Caco-2 (cell line): ENCODE measurements at regions of chr6 and their contacts with region 1.

Region 1: GRCh38 chr6:114304304-114304887 is 38.4 kb downstream of the HS3ST5 start:
- DNase-seq: peak in 1 of 2 experiments; percentile 10
- H3K4me3 ChIP-seq: no peak overlapping the region
- H3K4me3 Mint-ChIP-seq: no peak overlapping the region
- H3K27ac Mint-ChIP-seq: no peak overlapping the region
- H3K4me1 ChIP-seq: no peaks in the 10 kb centered on the region
- H3K4me1 Mint-ChIP-seq: no peaks in the 10 kb centered on the region
- H3K27me3 ChIP-seq: no peaks in the 10 kb centered on the region
- H3K27me3 Mint-ChIP-seq: no peaks in the 10 kb centered on the region
- CTCF ChIP-seq: peak; percentile 44 to 52

Region 2: DNA sequence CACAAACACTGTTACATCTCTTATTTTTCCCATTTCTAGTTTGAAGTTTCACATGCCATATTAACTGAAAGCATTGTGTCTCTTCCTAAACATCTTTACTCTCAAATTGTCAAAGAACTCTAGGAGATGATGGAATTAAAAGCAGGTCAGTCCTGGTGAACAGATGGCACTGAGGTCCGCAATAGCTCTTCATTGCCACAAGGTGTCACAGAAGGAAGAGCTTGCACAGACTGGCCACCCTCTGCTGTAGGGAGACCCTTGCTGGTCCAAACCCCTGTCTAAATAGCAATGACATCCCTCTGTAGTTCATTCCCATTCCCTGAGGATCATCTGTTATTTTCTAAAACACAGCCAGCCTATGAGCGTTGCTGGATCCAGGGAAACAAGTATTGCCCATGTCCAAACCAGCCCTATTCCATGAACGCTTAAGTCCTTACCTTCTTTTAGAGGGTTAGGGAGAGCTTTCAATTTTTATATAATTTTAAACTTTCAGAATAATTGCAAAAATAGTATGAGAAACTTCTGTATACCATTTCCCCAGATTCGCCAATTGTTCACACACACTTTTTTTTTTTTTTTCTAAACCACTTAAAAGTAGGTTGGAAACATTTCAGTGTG is 323.4 kb before region 1 on chr6:
- CTCF ChIA-PET with region 1: interaction called, 10 read pairs
- POLR2A ChIA-PET with region 1: no interaction called
- intact Hi-C with region 1: no loop called
- DNase-seq: peak; percentile 50 to 66
- H3K4me3 ChIP-seq: no peak overlapping the region
- H3K4me3 Mint-ChIP-seq: no peak overlapping the region
- H3K27ac Mint-ChIP-seq: no peak overlapping the region
- H3K4me1 ChIP-seq: no peaks in the 10 kb centered on the region
- H3K4me1 Mint-ChIP-seq: no peaks in the 10 kb centered on the region
- H3K27me3 ChIP-seq: no peaks in the 10 kb centered on the region
- H3K27me3 Mint-ChIP-seq: no peaks in the 10 kb centered on the region
- CTCF ChIP-seq: peak; percentile 76 to 78

Region 3: DNA sequence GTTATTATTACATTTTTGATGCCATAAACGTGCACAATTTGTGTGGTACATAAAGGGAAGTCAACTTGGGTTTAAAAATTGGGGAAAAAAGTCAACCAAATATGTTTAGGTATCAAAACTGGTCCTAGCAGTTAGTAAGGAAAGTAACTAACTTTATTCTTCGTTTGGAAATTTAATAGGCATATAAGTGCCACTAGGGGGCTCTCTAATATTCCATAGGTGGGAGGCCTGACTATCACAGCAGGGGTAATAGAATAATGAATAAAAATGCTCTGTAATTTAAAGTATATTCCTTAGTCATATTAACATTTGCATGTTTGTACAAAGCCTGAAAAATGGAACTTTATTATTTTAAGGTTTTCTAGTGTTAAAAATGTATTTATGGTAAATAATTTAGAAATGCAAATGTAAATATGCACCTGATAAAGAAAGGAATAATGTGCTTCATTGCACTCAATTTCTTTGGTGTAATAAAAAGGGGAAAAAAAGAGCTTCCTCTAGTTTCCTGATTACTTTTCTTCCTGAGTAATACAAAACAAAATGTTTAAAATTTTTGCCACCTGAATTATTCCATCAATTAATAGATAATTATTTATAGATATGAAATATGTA is 207.7 kb before region 1 on chr6:
- CTCF ChIA-PET with region 1: interaction called, 3 read pairs
- POLR2A ChIA-PET with region 1: no interaction called
- intact Hi-C with region 1: loop called (anchors 1 kb)
- DNase-seq: peak in 1 of 2 experiments; percentile 20
- H3K4me3 ChIP-seq: no peak overlapping the region
- H3K4me3 Mint-ChIP-seq: no peak overlapping the region
- H3K27ac Mint-ChIP-seq: no peak overlapping the region
- H3K4me1 ChIP-seq: no peaks in the 10 kb centered on the region
- H3K4me1 Mint-ChIP-seq: no peaks in the 10 kb centered on the region
- H3K27me3 ChIP-seq: no peaks in the 10 kb centered on the region
- H3K27me3 Mint-ChIP-seq: no peaks in the 10 kb centered on the region
- CTCF ChIP-seq: peak; percentile 67

Region 4: DNA sequence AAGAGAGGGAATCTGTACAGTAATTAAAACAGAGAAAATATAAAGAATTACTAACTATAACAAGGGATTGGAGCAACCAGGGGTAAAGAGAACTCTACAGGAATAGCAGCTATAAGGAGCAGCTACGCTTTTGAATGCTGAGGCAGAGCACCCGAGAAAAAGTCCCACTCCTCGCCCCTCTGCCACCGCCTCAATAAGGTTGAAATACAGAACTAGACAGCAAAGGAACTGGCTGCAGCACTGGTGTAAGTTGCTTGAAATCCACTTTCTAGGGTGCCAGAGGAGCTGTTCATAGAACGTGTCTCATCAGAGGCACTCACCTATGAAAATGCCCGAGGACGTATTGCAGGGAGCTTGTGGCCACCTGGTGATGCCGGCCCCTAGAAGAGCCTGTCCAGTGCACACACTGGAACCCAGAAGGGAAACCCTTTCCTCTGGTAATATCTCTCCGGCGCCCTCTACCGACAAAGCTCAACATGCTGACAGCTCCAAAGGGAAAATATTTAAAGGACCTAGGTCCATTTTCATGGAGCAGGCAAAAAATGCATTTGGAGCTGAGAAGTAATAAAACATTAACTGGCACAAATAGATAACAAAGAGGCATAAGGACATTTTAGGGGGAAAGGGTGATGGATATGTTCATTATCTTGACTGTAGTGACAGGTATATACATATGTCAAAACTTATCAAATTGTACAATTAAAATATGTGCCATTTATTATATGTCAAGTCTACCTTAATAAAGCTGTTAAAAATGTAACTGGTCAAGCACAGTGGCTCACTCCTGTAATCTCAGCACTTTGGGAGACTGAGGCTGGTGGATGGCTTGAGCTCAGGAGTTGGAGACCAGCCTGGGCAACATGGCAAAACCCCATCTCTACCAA is 196.0 kb before region 1 on chr6:
- CTCF ChIA-PET with region 1: interaction called, 11 read pairs
- POLR2A ChIA-PET with region 1: no interaction called
- intact Hi-C with region 1: no loop called
- DNase-seq: peak; percentile 85 to 87
- H3K4me3 ChIP-seq: no peak overlapping the region
- H3K4me3 Mint-ChIP-seq: no peak overlapping the region
- H3K27ac Mint-ChIP-seq: no peak overlapping the region
- H3K4me1 ChIP-seq: peaks cover 5% of the 10 kb centered on the region; the same call in 1 of the 2 replicates
- H3K4me1 Mint-ChIP-seq: peaks cover 13% of the 10 kb centered on the region
- H3K27me3 ChIP-seq: no peaks in the 10 kb centered on the region
- H3K27me3 Mint-ChIP-seq: no peaks in the 10 kb centered on the region
- CTCF ChIP-seq: peak; percentile 76 to 79

Region 5: DNA sequence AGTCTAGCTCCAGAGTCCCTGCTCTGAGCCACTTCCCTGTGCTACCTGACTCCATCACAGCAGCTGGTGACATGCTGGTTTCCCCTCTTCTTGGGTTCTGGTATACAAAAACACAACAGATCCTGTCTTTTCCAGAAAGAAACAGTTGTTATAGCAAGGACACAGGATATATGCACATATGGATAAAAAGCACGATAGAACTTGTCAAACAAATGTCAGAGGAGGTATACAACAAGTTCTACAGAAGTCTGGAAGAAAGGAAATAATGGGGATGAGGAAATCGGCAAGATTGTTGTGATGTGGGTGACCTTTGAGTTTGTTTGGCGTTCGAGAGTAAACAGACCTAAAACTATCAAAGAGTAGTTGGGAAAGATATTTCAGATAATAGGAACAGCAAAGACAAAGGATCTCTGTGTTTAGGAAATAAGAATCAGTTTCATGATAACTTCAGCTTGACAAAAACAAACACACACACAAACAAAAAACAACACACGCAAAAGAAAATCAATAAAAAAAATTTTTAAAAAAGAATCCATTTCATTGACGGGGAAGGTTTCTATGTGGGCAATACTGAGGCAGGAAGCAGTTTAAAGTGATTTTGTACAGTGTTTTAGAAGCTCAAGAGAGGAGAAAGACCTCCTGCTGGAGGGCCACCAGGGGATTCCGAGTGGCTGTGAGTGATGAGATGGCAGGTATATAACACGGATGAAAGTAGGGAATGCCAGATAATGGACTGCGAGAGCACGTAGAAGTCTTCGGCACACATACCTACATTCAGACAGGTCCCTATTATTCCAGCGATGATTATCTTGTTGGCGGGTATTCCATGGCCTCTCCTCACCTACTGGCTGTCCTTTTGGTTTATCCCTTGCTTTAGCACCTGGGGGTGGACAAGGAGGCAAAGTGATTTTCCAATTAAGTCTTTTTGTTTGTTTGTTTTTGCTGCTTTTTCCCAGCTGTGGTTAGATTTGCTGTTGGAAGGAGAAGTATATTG is 136.5 kb before region 1 on chr6:
- CTCF ChIA-PET with region 1: no interaction called
- POLR2A ChIA-PET with region 1: no interaction called
- intact Hi-C with region 1: loop called (anchors 2 kb)
- DNase-seq: peak; percentile 36 to 38
- H3K4me3 ChIP-seq: no peak overlapping the region
- H3K4me3 Mint-ChIP-seq: peak overlapping the region; percentile 52
- H3K27ac Mint-ChIP-seq: peak overlapping the region; percentile 12
- H3K4me1 ChIP-seq: peaks cover 48% of the 10 kb centered on the region
- H3K4me1 Mint-ChIP-seq: peaks cover 26% of the 10 kb centered on the region
- H3K27me3 ChIP-seq: no peaks in the 10 kb centered on the region
- H3K27me3 Mint-ChIP-seq: no peaks in the 10 kb centered on the region
- CTCF ChIP-seq: no peak

Region 6: DNA sequence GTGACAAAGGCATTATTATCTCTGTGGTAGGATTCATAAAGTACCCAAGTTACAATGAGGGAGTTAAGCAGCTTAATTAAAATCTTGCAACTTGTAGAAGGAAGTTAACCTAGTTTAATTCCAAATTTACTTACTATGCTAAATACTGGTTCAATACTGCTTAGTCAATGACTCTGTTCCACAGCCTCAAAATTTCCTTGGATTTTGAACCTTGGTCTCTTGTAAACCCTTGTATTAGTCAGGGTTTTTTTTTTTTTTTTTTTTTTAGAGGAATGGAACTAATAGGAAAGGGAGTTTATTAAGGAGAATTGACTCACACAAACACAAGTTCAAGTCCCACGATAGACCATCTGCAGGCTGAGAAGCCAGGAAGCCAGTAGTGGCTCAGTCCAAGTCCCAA is 125.0 kb before region 1 on chr6:
- CTCF ChIA-PET with region 1: no interaction called
- POLR2A ChIA-PET with region 1: no interaction called
- intact Hi-C with region 1: no loop called
- DNase-seq: no peak
- H3K4me3 ChIP-seq: no peak overlapping the region
- H3K4me3 Mint-ChIP-seq: no peak overlapping the region
- H3K27ac Mint-ChIP-seq: no peak overlapping the region
- H3K4me1 ChIP-seq: no peaks in the 10 kb centered on the region
- H3K4me1 Mint-ChIP-seq: no peaks in the 10 kb centered on the region
- H3K27me3 ChIP-seq: no peaks in the 10 kb centered on the region
- H3K27me3 Mint-ChIP-seq: no peaks in the 10 kb centered on the region
- CTCF ChIP-seq: no peak

Region 7: GRCh38 chr6:114194362-114195026 is 109.9 kb before region 1 on chr6:
- CTCF ChIA-PET with region 1: interaction called, 3 read pairs
- POLR2A ChIA-PET with region 1: interaction called, 3 read pairs
- intact Hi-C with region 1: loop called (anchors 10 kb)
- DNase-seq: peak in 1 of 2 experiments; percentile 7
- H3K4me3 ChIP-seq: no peak overlapping the region
- H3K4me3 Mint-ChIP-seq: no peak overlapping the region
- H3K27ac Mint-ChIP-seq: peak overlapping the region; percentile 89
- H3K4me1 ChIP-seq: peaks cover 22% of the 10 kb centered on the region
- H3K4me1 Mint-ChIP-seq: peaks cover 31% of the 10 kb centered on the region
- H3K27me3 ChIP-seq: no peaks in the 10 kb centered on the region
- H3K27me3 Mint-ChIP-seq: no peaks in the 10 kb centered on the region
- CTCF ChIP-seq: no peak

Region 8: GRCh38 chr6:114534813-114535212 is 230.4 kb after region 1 on chr6:
- CTCF ChIA-PET with region 1: no interaction called
- POLR2A ChIA-PET with region 1: no interaction called
- intact Hi-C with region 1: no loop called
- DNase-seq: no peak
- H3K4me3 ChIP-seq: no peak overlapping the region
- H3K4me3 Mint-ChIP-seq: no peak overlapping the region
- H3K27ac Mint-ChIP-seq: no peak overlapping the region
- H3K4me1 ChIP-seq: no peaks in the 10 kb centered on the region
- H3K4me1 Mint-ChIP-seq: no peaks in the 10 kb centered on the region
- H3K27me3 ChIP-seq: no peaks in the 10 kb centered on the region
- H3K27me3 Mint-ChIP-seq: no peaks in the 10 kb centered on the region
- CTCF ChIP-seq: no peak